Naive thymus-derived CD4-positive, alpha-beta T cell (primary cell): ENCODE measurements at regions of chr10 and their contacts with region 1.

Region 1: DNA sequence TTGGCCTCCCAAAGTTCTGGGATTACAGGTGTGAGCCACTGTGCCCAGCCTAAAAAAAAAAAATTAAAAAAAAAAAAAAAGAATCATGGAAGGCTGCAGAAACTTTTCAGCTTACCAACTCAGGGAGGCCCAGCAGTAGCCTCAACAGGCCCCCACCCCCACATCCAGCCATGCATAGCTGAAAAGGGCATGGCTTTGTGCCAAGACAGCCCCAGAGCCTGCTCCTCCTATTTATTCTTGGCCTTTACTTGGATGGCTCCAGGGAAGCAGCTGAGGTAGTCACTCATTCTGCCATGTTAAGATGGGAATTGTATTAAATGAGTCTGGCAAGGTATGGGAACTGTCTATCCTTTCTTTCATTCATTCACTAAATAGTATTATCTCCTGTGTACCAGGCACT is 13.7 kb upstream of the CNNM2 start:
- DNase-seq: no peak
- ATAC-seq: no peak
- H3K4me3 ChIP-seq: no peak overlapping the region
- H3K4me3 Mint-ChIP-seq: no peak overlapping the region
- H3K27ac ChIP-seq: no peak overlapping the region
- H3K27ac Mint-ChIP-seq: no peak overlapping the region
- H3K4me1 ChIP-seq: no peaks in the 10 kb centered on the region
- H3K4me1 Mint-ChIP-seq: peaks cover 0 to 2% (median 0%) of the 10 kb centered on the region in 7 donors
- H3K27me3 ChIP-seq: no peaks in the 10 kb centered on the region
- H3K27me3 Mint-ChIP-seq: no peaks in the 10 kb centered on the region

Region 2: GRCh38 chr10:102220612-102221011 is 683.7 kb before region 1 on chr10:
- CTCF ChIA-PET with region 1: no interaction called
- POLR2A ChIA-PET with region 1: no interaction called
- intact Hi-C with region 1: no loop called
- DNase-seq: no peak
- ATAC-seq: no peak
- H3K4me3 ChIP-seq: no peak overlapping the region
- H3K4me3 Mint-ChIP-seq: no peak overlapping the region
- H3K27ac ChIP-seq: no peak overlapping the region
- H3K27ac Mint-ChIP-seq: no peak overlapping the region
- H3K4me1 ChIP-seq: peaks cover 0 to under 1% of the 10 kb centered on the region in 2 donors
- H3K4me1 Mint-ChIP-seq: peaks cover under 1 to 2% (median 1%) of the 10 kb centered on the region in 7 donors
- H3K27me3 ChIP-seq: no peaks in the 10 kb centered on the region
- H3K27me3 Mint-ChIP-seq: peaks cover 0 to 36% (median 3%) of the 10 kb centered on the region in 5 donors

Region 3: DNA sequence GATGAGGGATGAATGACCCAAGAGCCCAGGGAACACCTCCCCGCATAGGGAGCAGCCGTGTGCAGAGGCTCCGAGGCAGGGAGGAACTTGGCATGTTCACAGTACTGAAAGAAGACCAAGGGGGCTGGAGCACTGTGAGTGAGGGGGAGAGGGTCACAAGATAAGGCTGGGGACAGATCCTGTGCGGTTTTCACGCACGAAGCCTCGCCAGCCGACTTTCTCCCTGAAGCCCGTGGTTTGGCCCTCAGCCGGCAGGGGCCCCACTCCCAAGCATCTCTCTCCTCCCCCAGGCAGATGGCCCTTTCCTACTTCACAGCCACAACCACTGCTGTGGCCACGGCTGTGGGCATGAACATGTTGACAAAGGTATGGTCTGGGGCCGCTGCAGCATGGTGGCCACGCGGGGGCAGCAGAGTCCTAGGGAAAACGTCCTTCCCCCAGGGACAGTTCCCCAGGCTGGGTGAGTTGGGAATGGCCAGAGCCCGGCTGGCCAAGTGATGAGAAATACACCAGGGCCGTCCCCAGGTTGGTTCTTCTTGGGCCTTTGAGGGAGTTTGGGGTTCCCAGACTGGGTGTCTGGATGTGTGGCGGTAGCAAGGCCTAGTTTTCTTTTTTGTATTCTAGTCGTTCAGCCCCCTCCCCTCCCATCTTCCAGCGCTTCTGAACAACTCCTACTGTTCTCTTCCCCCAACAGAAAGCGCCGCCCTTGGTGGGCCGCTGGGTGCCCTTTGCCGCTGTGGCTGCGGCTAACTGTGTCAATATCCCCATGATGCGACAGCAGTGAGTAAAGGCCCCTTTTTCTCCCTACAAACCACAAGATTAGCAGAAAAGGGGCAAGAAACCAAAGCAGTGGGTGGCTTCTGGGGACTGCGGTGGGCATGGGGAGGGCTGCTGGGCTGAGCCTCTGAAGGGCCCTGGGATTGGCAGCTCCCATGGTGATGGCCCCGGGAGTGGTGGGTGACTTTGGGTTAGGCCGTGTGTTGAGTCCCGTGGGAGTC is 175.0 kb before region 1 on chr10:
- CTCF ChIA-PET with region 1: no interaction called
- POLR2A ChIA-PET with region 1: no interaction called
- intact Hi-C with region 1: loop called in 1 of 2 experiments (anchors 2 kb)
- DNase-seq: peak in 7 of 9 donors; percentile 19 to 63 (median 36)
- ATAC-seq: peak; percentile 92
- H3K4me3 ChIP-seq: no peak overlapping the region
- H3K4me3 Mint-ChIP-seq: no peak overlapping the region
- H3K27ac ChIP-seq: peak overlapping the region; percentile 23
- H3K27ac Mint-ChIP-seq: peak overlapping the region in 6 of 9 donors; percentile 1 to 65 (median 56)
- H3K4me1 ChIP-seq: no peaks in the 10 kb centered on the region
- H3K4me1 Mint-ChIP-seq: peaks cover 0 to 16% (median 7%) of the 10 kb centered on the region in 7 donors
- H3K27me3 ChIP-seq: no peaks in the 10 kb centered on the region
- H3K27me3 Mint-ChIP-seq: no peaks in the 10 kb centered on the region